ENCODE measurements at regions of chr7 and their contacts with region 1.

Region 1: DNA sequence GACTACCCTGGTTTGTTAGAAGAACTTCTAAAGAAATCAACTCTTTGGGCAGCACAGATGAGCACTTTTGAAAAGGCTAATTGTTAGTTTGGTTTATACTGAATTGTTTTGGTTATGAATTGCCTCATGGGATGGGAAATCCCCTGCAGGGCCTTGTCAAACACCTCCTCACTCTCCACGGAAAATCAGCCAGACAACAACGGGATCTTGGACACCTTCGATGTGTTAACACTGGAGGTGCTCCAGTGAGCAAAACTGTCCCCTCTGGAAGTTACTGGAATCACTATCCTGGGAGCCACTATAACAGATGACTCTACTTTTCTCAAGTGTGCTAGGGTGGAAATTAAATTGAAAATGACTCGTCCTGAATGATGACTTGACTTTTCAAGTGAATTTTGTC is 38.7 kb downstream of the CDK6 start:
- DNase-seq: peak; percentile 64
- H3K4me3 Mint-ChIP-seq: no peak overlapping the region
- H3K27ac Mint-ChIP-seq: no peak overlapping the region
- H3K4me1 Mint-ChIP-seq: peaks cover 32% of the 10 kb centered on the region
- H3K27me3 Mint-ChIP-seq: no peaks in the 10 kb centered on the region

Region 2: GRCh38 chr7:92751902-92752901 is 45.5 kb before region 1 on chr7:
- CTCF ChIA-PET with region 1: no interaction called
- POLR2A ChIA-PET with region 1: no interaction called
- intact Hi-C with region 1: loop called (anchors 2 kb)
- DNase-seq: no peak
- H3K4me3 Mint-ChIP-seq: no peak overlapping the region
- H3K27ac Mint-ChIP-seq: peak overlapping the region; percentile 72
- H3K4me1 Mint-ChIP-seq: peaks cover 63% of the 10 kb centered on the region
- H3K27me3 Mint-ChIP-seq: no peaks in the 10 kb centered on the region

Region 3: DNA sequence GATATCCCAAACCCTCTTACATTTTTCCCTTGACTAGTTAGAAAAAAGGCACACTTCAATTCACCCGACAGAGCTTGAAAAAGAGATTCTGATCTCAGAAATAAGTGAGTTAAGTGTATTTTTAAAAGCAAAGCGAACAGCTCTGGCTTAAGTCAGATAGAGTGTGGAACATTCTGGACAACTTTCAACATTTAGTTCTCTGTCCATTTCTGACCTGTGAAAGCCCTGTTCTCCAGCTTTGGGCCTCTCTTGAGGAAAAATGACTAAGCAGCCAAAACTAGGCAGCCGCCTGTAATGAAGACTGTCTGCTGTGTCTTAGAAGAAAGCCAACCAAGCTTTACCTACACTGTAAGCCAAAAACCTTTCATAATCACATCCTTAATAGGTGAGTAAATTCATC is 11.8 kb before region 1 on chr7:
- CTCF ChIA-PET with region 1: no interaction called
- POLR2A ChIA-PET with region 1: no interaction called
- intact Hi-C with region 1: no loop called
- DNase-seq: no peak
- H3K4me3 Mint-ChIP-seq: no peak overlapping the region
- H3K27ac Mint-ChIP-seq: no peak overlapping the region
- H3K4me1 Mint-ChIP-seq: peaks cover 65% of the 10 kb centered on the region
- H3K27me3 Mint-ChIP-seq: no peaks in the 10 kb centered on the region

Region 4: DNA sequence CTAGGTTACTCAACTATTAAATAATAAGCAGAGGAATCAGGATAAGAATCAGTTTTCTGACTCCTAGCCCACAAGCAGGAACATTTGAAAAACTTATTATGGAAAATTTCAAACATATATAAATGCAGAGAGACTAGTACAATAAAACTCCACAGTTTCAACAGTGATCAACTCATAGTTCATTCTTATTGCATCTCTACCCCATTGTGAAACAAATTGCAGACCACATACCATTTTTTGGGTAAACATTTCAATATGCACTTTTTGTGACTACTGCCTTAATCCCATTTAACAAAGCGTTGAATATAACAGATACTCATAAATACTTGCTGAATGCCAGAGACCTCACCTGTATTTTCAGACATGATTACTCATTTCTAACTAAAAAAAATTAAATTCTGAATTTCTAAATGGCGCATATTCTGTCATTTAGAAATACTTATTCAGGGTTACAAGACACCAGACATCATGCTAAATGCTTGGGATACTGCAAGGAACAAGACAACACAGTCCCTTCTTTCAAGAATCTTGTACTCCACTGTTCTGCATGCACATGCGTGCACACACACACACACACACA is 27.3 kb after region 1 on chr7:
- CTCF ChIA-PET with region 1: no interaction called
- POLR2A ChIA-PET with region 1: no interaction called
- intact Hi-C with region 1: loop called (anchors 2 kb)
- DNase-seq: no peak
- H3K4me3 Mint-ChIP-seq: peak overlapping the region; percentile 56
- H3K27ac Mint-ChIP-seq: peak overlapping the region; percentile 44
- H3K4me1 Mint-ChIP-seq: peaks cover 75% of the 10 kb centered on the region
- H3K27me3 Mint-ChIP-seq: no peaks in the 10 kb centered on the region